ENCODE measurements at regions of chr11 and their contacts with region 1.

Region 1: DNA sequence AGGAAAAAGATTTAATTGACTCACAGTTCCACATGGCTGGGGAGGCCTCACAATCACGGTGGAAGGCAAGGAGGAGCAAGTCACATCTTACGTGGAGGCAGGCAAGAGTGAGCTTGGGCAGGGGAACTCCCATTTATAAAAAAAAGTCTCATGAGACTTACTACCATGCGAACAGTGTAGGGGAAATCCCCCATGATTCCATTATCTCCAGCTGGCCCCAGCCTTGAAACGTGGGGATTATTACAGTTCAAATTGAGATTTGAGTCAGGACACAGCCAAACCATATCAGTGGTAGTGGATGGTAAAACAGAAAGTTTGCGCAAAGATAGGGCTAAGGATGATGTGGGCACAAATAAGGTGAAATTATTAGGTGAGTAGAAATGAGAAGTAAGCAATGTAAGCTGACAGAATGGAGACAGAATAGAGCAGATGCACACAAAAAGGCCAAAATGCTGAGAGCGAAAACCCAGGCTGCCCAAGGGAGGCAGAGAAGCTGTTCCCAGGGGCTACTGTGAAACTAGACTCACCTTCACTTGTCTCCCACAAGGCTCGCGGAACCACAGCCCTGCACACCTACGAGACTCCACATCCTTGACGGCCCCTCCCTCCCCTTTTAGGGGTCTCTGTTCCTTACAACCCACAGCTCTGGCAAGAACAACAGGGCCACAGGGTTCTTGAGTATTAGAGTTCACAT is 377.6 kb downstream of the CADM1 start:
- DNase-seq: no peak
- H3K4me3 Mint-ChIP-seq: no peak overlapping the region
- H3K27ac Mint-ChIP-seq: no peak overlapping the region
- H3K4me1 Mint-ChIP-seq: no peaks in the 10 kb centered on the region
- H3K27me3 Mint-ChIP-seq: peaks cover 2% of the 10 kb centered on the region

Region 2: GRCh38 chr11:115067900-115068530 is 58.6 kb before region 1 on chr11:
- CTCF ChIA-PET with region 1: no interaction called
- intact Hi-C with region 1: loop called (anchors 2 kb)
- DNase-seq: no peak
- H3K4me3 Mint-ChIP-seq: no peak overlapping the region
- H3K27ac Mint-ChIP-seq: no peak overlapping the region
- H3K4me1 Mint-ChIP-seq: no peaks in the 10 kb centered on the region
- H3K27me3 Mint-ChIP-seq: peaks cover 3% of the 10 kb centered on the region

Region 3: DNA sequence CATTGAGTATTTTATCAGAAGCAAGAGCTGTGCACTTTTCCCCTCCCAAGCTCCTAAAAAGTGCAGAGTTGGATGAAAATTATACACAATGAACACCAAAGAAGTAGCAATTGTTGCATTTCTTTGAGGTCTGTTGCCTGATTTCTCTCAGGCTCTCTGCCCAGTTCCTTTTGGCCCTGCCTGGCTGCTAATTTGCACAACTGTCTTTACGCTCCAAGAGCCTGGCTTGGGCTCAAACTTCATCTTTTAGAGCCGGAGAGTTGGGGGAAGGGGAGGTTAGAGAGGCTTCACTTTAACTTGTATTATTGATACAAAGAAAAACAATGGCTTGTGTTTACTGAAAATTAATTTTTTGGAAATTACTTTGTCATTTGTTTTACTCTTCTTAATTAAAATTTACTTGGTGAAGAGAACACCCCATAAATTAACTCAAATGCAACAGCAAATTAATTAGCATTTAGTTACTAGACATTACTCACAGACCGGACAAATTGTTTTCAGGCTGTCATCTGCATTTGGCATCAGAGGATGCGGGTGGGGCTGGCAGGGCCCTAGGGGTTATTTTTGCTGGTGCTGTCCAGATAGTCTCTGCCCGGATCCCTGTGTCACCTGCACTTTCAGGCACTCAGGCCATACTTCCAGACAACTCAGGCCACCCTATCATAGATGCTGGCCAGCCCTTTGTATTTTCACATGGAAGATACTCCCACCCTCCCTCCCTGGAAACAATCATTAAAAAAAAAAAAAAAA is 41.0 kb before region 1 on chr11:
- CTCF ChIA-PET with region 1: no interaction called
- intact Hi-C with region 1: no loop called
- DNase-seq: no peak
- H3K4me3 Mint-ChIP-seq: no peak overlapping the region
- H3K27ac Mint-ChIP-seq: no peak overlapping the region
- H3K4me1 Mint-ChIP-seq: no peaks in the 10 kb centered on the region
- H3K27me3 Mint-ChIP-seq: peaks cover 7% of the 10 kb centered on the region

Region 4: DNA sequence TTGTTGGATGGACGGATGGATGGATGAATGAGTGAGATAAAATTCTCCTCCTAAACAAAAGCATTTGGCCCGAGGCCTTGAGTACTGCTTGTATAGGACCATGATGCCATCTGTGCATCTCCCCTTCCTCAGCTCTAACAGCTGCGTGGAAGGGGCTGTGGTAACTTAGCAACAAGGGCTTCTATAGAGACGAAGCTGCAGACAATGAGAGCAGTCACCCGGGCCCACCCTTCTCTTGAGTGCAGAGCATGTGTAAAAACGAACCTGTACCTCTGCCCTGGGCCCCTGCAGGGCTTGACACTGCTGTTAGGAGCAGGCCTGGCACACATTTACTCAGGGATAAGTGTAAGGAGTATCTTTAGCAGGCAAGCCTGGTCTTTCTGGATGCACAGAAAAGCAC is 13.9 kb before region 1 on chr11:
- CTCF ChIA-PET with region 1: no interaction called
- intact Hi-C with region 1: no loop called
- DNase-seq: no peak
- H3K4me3 Mint-ChIP-seq: no peak overlapping the region
- H3K27ac Mint-ChIP-seq: no peak overlapping the region
- H3K4me1 Mint-ChIP-seq: no peaks in the 10 kb centered on the region
- H3K27me3 Mint-ChIP-seq: peaks cover 9% of the 10 kb centered on the region

Region 5: GRCh38 chr11:115581871-115582639 is 455.4 kb after region 1 on chr11:
- CTCF ChIA-PET with region 1: no interaction called
- intact Hi-C with region 1: no loop called
- DNase-seq: no peak
- H3K4me3 Mint-ChIP-seq: no peak overlapping the region
- H3K27ac Mint-ChIP-seq: no peak overlapping the region
- H3K4me1 Mint-ChIP-seq: no peaks in the 10 kb centered on the region
- H3K27me3 Mint-ChIP-seq: no peaks in the 10 kb centered on the region